Ovary (tissue), 10 donors: ENCODE measurements at regions of chr20 and their contacts with region 1.

Region 1: GRCh38 chr20:49982346-49983122 is at the start of gene SNAI1:
- DNase-seq: peak; percentile 80 to 85 (median 83)
- H3K4me3 ChIP-seq: peak within 1 kb of the TSS; percentile 32
- H3K27ac ChIP-seq: no peak within 1 kb of the TSS
- H3K4me1 ChIP-seq: peaks cover 14% of the 10 kb centered on the region
- H3K27me3 ChIP-seq: no peaks in the 10 kb centered on the region
- CTCF ChIP-seq: peak in 2 of 3 donors; percentile 65 to 70
- EP300 ChIP-seq: no peak
- POLR2A ChIP-seq: peak; percentile 76
- total RNA-seq, gene SNAI1: 1.1 to 9.0 (median 1.7) TPM

Region 2: GRCh38 chr20:49435659-49436058 is 546.9 kb before region 1 on chr20:
- intact Hi-C with region 1: no loop called
- DNase-seq: no peak
- H3K4me3 ChIP-seq: no peak overlapping the region
- H3K27ac ChIP-seq: no peak overlapping the region
- H3K4me1 ChIP-seq: no peaks in the 10 kb centered on the region
- H3K27me3 ChIP-seq: no peaks in the 10 kb centered on the region
- CTCF ChIP-seq: no peak
- EP300 ChIP-seq: no peak
- POLR2A ChIP-seq: no peak

Region 3: DNA sequence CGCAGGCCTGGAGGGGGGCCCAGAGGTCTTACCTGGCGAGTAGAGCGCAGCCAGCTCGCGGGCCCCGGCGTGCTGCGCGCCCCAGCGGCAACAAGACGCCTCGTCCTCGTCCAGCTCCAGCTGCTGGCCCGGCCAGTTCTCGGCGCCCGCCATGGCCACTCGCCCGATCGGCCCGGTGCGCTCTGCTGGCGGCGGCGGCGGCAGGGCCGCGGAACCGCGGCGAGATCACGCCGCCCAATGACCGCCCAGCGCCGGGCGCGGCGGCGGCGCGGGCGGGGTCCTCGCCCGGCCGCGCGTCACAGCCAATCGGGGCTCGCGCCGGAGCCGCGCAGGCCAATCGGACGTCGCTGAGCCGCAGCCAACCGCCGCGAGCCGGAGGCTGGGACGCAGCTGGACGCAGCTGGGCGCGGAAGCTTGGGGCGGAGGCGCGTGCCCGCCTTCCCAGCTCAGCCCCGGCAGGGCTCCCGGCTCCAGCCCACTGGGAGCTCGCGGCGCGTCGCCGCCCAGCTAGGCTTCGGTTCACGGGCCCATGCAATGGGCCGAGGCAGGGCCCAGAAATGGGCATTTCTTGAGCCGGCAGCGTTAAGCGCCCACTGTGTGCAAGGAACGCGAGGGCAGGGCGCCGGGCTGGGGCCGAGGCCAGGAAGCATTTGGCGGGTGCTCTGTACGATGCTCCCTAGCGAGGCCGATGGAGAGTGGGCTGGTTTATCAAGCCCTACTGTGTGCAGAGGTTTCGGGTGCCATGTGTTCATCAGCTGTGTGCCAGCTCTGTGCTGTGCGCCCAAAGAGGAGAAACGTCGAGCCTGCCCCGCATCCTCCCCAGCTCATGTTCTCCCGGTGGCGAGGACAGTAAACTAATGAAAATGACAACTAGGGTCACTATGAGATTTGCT is 171.2 kb after region 1 on chr20 and contains the start of gene PEDS1:
- intact Hi-C with region 1: loop called in 1 of 4 experiments (anchors 10 kb)
- DNase-seq: peak; percentile 90 to 95 (median 93)
- H3K4me3 ChIP-seq: peak within 1 kb of the TSS; percentile 51
- H3K27ac ChIP-seq: peak within 1 kb of the TSS; percentile 13 to 53
- H3K4me1 ChIP-seq: peaks cover 10% of the 10 kb centered on the region
- H3K27me3 ChIP-seq: no peaks in the 10 kb centered on the region
- CTCF ChIP-seq: peak in 2 of 3 donors; percentile 14 to 17
- EP300 ChIP-seq: no peak
- POLR2A ChIP-seq: peak; percentile 65
- total RNA-seq, gene PEDS1: 7.5 to 18.2 (median 12.6) TPM

Region 4: GRCh38 chr20:50172347-50173013 is 189.9 kb after region 1 on chr20:
- intact Hi-C with region 1: loop called (anchors 5 to 10 kb)
- DNase-seq: peak; percentile 86 to 92 (median 90)
- H3K4me3 ChIP-seq: peak overlapping the region; percentile 61
- H3K27ac ChIP-seq: peak overlapping the region; percentile 37 to 73
- H3K4me1 ChIP-seq: peaks cover 3% of the 10 kb centered on the region
- H3K27me3 ChIP-seq: no peaks in the 10 kb centered on the region
- CTCF ChIP-seq: no peak
- EP300 ChIP-seq: no peak
- POLR2A ChIP-seq: peak; percentile 76

Region 5: GRCh38 chr20:50460460-50461267 is 478.1 kb after region 1 on chr20:
- intact Hi-C with region 1: loop called in 1 of 4 experiments (anchors 10 kb)
- DNase-seq: peak; percentile 80 to 94 (median 90)
- H3K4me3 ChIP-seq: no peak overlapping the region
- H3K27ac ChIP-seq: no peak overlapping the region
- H3K4me1 ChIP-seq: peaks cover 5% of the 10 kb centered on the region
- H3K27me3 ChIP-seq: no peaks in the 10 kb centered on the region
- CTCF ChIP-seq: peak; percentile 58 to 98 (median 95)
- EP300 ChIP-seq: no peak
- POLR2A ChIP-seq: peak; percentile 39